Activated T-helper 2 cell treated with anti-CD3 and anti-CD28 coated beads, Interferon-gamma antibody, Interleukin-2, Interleukin-4, amounts not matched to agents 10 μg/mL and 5 μg/mL and 100 μg/mL, durations not matched to agents 14 hours and 24 hours and 36 hours (primary cell): ENCODE measurements at regions of chr4 and their contacts with region 1.

Region 1: DNA sequence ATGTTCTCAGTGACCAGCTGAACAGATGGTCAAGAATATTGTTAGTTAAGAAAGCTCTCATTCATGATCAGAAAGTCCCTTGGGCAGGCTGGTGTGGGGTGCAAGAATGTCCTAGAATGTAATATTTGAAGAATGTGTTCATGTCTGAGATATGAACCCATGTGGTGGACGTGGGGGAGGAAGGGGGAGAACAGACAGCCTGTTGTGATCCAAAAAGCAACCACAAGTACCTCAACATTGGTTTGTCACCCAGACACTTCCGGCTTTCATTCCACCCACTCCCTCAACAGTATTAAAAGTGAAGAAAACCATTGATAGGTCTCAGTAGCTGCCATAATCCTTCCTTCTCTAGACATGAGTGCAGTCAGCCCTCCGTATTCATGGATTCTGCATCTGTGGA is 82.2 kb downstream of the MAML3 start:
- DNase-seq: peak; percentile 72
- H3K4me3 Mint-ChIP-seq: peak overlapping the region; percentile 47
- H3K27ac Mint-ChIP-seq: peak overlapping the region; percentile 60
- H3K4me1 Mint-ChIP-seq: peaks cover 64% of the 10 kb centered on the region
- H3K27me3 Mint-ChIP-seq: peaks cover 18% of the 10 kb centered on the region

Region 2: GRCh38 chr4:139144161-139144859 is 927.5 kb before region 1 on chr4:
- intact Hi-C with region 1: no loop called
- DNase-seq: no peak
- H3K4me3 Mint-ChIP-seq: no peak overlapping the region
- H3K27ac Mint-ChIP-seq: no peak overlapping the region
- H3K4me1 Mint-ChIP-seq: peaks cover 24% of the 10 kb centered on the region
- H3K27me3 Mint-ChIP-seq: no peaks in the 10 kb centered on the region

Region 3: DNA sequence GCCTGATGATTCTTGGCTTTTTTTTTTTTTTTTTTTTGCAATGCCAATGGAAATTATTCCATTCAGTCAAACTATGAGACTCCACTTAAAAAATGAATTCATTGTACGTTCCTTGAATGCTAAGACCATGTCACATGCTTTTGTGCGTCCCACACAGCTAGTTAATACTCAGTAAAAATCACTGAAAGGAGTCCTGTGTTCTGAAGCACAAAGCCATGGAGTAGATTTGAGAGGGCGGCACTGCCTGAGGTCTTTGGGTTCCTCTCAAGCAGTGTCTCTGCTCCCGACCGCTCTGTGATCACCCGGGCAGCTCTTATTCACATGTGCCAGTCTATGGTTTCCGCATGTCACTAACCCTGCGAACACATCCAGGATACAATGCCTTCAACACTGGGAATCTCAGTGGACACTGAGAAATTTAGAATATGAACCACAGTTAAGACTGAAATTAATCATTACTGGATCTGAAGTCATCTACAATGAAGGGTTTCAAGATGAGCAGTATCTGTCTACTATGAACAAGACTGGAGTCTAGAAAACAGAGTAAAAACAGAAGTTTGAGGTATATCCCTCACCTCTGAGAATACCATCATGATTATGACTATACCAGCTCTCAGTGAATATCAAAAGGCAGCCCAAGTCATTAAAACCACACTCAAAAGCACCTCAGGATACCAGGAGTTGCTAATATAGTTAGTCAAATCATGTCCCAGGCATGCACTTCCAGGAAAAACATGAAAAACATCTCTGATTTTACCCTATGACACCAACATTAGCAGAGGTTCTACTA is 213.2 kb before region 1 on chr4:
- intact Hi-C with region 1: loop called (anchors 5 kb)
- DNase-seq: no peak
- H3K4me3 Mint-ChIP-seq: no peak overlapping the region
- H3K27ac Mint-ChIP-seq: peak overlapping the region; percentile 61
- H3K4me1 Mint-ChIP-seq: peaks cover 41% of the 10 kb centered on the region
- H3K27me3 Mint-ChIP-seq: peaks cover 26% of the 10 kb centered on the region

Region 4: DNA sequence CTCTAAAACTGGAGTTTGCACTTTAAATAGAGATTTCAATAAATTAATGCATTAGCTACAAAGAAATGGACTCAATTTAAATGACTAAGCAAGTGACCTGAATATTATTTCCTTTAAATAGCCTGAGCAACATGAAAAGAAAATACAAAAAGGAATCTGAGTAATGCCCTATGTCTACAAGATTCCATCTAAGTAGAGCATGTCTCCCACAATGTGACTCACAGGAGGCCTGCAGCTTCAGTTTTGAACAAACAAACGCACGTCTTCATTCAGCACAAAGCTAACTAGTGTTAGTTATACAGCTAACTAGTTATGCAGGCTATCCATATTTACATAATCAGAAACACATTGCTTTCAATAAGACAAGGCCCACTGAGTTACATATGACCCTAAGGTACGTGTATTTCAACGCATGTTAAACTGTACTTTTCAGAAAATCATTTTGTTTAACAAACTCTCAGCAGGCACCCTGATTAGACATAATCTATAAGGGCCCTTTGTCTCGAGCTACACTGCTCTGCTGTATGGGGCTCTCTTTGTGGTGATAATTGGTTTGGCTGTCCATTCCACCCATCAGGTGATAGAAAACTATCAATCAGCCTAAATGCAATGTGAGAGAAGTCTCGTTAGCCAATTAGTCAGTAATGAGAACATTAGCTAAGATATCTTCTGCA is 34.3 kb before region 1 on chr4:
- intact Hi-C with region 1: no loop called
- DNase-seq: no peak
- H3K4me3 Mint-ChIP-seq: no peak overlapping the region
- H3K27ac Mint-ChIP-seq: no peak overlapping the region
- H3K4me1 Mint-ChIP-seq: peaks cover 13% of the 10 kb centered on the region
- H3K27me3 Mint-ChIP-seq: peaks cover 31% of the 10 kb centered on the region

Region 5: GRCh38 chr4:140049024-140049848 is 22.6 kb before region 1 on chr4:
- intact Hi-C with region 1: loop called (anchors 1 kb)
- DNase-seq: peak; percentile 52
- H3K4me3 Mint-ChIP-seq: peak overlapping the region; percentile 74
- H3K27ac Mint-ChIP-seq: peak overlapping the region; percentile 78
- H3K4me1 Mint-ChIP-seq: peaks cover 55% of the 10 kb centered on the region
- H3K27me3 Mint-ChIP-seq: peaks cover 36% of the 10 kb centered on the region

Region 6: GRCh38 chr4:140061659-140062289 is 10.0 kb before region 1 on chr4:
- intact Hi-C with region 1: loop called (anchors 1 kb)
- DNase-seq: no peak
- H3K4me3 Mint-ChIP-seq: no peak overlapping the region
- H3K27ac Mint-ChIP-seq: no peak overlapping the region
- H3K4me1 Mint-ChIP-seq: peaks cover 38% of the 10 kb centered on the region
- H3K27me3 Mint-ChIP-seq: peaks cover 44% of the 10 kb centered on the region

Region 7: GRCh38 chr4:140085062-140085622 is 13.3 kb after region 1 on chr4:
- intact Hi-C with region 1: loop called (anchors 1 kb)
- DNase-seq: no peak
- H3K4me3 Mint-ChIP-seq: no peak overlapping the region
- H3K27ac Mint-ChIP-seq: no peak overlapping the region
- H3K4me1 Mint-ChIP-seq: peaks cover 44% of the 10 kb centered on the region
- H3K27me3 Mint-ChIP-seq: peaks cover 5% of the 10 kb centered on the region

Region 8: GRCh38 chr4:140095694-140096482 is 24.1 kb after region 1 on chr4:
- intact Hi-C with region 1: loop called (anchors 2 kb)
- DNase-seq: peak; percentile 61
- H3K4me3 Mint-ChIP-seq: peak overlapping the region; percentile 86
- H3K27ac Mint-ChIP-seq: peak overlapping the region; percentile 99
- H3K4me1 Mint-ChIP-seq: peaks cover 82% of the 10 kb centered on the region
- H3K27me3 Mint-ChIP-seq: no peaks in the 10 kb centered on the region

Region 9: GRCh38 chr4:140103676-140104075 is 31.9 kb after region 1 on chr4:
- intact Hi-C with region 1: loop called (anchors 1 kb)
- DNase-seq: peak; percentile 42
- H3K4me3 Mint-ChIP-seq: no peak overlapping the region
- H3K27ac Mint-ChIP-seq: peak overlapping the region; percentile 54
- H3K4me1 Mint-ChIP-seq: peaks cover 66% of the 10 kb centered on the region
- H3K27me3 Mint-ChIP-seq: peaks cover 3% of the 10 kb centered on the region